ENCODE measurements at regions of chr7 and their contacts with region 1.

Region 1: DNA sequence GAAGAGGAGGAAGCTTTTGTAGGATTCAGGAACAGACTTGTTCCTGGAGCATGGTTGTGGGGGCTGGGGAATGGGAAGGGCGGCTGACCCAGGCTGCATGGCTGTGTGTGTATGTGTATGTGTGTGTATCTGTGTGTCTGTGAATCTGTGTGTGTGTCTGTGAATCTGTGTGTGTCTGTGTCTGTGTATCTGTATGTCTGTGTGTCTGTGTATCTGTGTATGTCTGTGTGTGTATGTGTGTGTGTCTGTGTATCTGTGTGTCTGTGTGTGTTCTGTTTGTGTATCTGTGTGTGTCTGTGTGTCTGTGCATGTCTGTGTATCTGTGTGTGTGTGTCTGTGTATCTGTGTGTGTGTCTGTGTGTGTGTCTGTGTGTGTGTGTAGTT is 6.6 kb upstream of the STX1A start:
- DNase-seq: no peak
- H3K4me3 ChIP-seq: no peak overlapping the region
- H3K27me3 ChIP-seq: no peaks in the 10 kb centered on the region
- CTCF ChIP-seq: no peak

Region 2: DNA sequence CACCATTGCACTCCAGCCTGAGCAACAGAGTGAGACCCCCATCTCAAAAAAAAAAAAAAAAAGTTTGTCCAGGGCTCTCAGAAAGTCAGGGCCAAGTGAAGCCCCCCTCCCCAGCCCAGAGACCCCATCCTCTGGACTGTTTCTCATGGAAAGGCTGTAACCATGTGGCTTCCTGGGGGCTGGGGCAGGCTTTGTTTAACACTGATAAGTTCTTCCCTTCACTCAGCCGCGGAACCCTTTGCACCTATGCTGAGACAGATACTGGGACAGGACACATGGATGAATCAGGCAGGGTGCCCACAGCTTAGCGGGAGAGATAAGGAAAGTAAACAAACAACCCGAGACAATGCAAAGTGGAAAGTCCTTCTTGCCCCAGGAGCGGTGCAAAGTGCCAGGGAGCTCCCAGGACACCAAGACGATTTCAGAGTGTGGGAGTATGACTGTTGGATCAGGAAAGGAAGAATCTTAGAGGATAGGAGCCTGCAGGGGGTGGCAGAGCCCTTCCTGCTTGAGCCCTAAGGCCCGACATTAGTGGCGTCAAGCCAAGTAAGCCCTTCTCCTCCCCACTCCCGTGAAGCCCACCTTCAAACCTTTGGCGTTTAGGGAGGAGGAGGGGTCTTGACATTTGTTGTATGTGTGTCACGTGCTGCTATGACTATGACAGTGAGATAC is 113.3 kb before region 1 on chr7:
- CTCF ChIA-PET with region 1: interaction called, 159 read pairs
- POLR2A ChIA-PET with region 1: no interaction called
- DNase-seq: no peak
- H3K4me3 ChIP-seq: no peak overlapping the region
- H3K27me3 ChIP-seq: peaks cover 5% of the 10 kb centered on the region
- CTCF ChIP-seq: peak; percentile 31

Region 3: GRCh38 chr7:73626814-73627213 is 99.3 kb before region 1 on chr7:
- CTCF ChIA-PET with region 1: interaction called, 13 read pairs
- POLR2A ChIA-PET with region 1: no interaction called
- DNase-seq: no peak
- H3K4me3 ChIP-seq: no peak overlapping the region
- H3K27me3 ChIP-seq: peaks cover 39% of the 10 kb centered on the region
- CTCF ChIP-seq: peak; percentile 28

Region 4: DNA sequence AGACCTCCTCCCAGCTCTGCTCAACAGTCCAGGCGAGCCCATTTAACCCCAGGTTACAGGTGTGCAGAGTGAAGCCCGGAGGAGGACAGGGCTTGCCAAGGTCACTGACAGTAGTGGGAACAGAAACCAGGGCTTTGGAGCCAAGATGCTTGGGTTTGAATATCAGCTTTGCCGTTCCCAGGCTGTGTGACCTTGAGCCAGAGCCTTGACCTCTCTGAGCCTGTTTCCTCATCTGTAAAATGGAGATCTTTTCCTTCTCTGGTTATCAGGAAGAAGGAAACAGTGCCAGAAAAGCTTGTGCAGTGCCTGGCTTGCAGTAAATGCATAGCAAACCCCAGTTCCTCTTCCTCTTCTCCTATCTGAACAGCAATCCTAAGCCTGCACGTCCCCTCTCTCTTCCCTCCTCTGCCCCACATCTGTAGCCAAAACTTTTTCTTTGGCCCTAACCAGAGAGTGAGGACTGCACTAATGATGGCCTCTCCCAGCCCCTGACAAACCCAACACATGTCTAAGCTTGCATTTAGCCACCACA is 80.4 kb before region 1 on chr7:
- CTCF ChIA-PET with region 1: interaction called, 11 read pairs
- POLR2A ChIA-PET with region 1: no interaction called
- DNase-seq: no peak
- H3K4me3 ChIP-seq: no peak overlapping the region
- H3K27me3 ChIP-seq: peaks cover 36% of the 10 kb centered on the region
- CTCF ChIP-seq: no peak

Region 5: DNA sequence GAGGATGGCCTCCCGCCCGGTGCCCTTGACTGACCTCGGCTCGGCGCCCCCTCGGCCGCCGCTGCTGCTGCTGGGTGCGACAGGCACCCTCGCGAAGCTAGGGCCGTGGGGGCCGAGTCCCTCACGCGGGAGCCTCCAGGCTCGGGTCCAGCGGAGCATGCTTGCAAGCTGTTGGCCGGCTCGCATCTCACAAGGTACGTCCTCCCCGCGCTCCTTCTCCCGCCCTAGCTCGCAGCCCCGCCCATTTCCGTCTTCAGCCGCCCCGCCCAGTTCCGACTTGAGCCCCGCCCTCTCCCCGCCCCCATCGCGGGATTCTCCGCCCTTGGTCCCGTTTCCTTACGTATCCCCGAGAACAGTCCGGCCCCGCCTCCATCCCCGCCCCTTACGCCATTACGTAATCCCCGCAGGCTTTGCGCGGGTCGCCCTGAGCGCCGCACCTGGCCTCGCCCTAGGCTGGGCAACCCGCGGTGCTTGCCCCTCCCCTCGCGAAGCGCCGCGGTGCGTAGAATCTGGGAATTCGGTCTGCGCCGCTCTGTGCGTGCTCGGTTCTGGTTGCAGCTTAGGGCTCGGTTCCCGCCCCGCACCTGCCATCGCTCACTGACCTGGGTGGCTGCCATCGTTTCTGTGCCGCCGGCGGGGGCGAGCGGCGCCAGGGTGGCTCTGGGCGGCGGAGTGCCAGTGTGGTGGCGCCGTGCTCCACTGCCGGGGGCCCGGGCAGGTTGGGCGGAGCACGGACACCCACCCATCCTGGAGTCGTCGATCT is 12.7 kb after region 1 on chr7 and contains the start of gene ABHD11:
- CTCF ChIA-PET with region 1: interaction called, 21 read pairs
- POLR2A ChIA-PET with region 1: no interaction called
- DNase-seq: peak; percentile 73
- H3K4me3 ChIP-seq: peak within 1 kb of the TSS; percentile 76
- H3K27me3 ChIP-seq: no peaks in the 10 kb centered on the region
- CTCF ChIP-seq: no peak
- polyA plus RNA-seq, gene ABHD11: 11.6 and 16.9 TPM in 2 replicates

Measured in BJ (cell line).